Breast epithelium (tissue), 4 donors: ENCODE measurements at regions of chr9 and their contacts with region 1.

Region 1: GRCh38 chr9:68619636-68620035 is 79.0 kb upstream of the TMEM252 start:
- DNase-seq: no peak
- H3K4me3 ChIP-seq: no peak overlapping the region
- H3K27ac ChIP-seq: no peak overlapping the region
- H3K4me1 ChIP-seq: no peaks in the 10 kb centered on the region
- H3K27me3 ChIP-seq: no peaks in the 10 kb centered on the region
- CTCF ChIP-seq: no peak
- POLR2A ChIP-seq: no peak

Region 2: DNA sequence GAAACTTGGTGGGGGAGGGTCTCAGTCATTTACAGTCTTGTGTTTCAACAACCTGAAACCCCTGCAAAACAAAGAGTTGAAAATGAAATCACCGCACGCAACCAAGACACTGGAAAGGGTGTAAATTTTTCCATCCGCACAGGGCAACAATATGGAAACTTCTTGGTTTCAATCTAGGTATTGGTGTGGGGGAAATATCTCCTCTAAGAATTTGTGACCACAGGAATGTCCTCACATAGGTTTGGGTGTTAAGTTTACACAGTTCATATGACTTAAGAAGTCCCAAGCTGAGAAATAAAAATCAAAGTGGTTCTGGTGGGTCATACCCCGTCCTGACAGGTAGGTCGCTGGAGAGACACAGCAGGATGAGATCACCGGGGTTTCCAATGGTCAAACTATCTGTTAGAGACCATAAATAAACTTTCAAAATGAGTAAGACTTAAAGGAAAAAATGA is 33.5 kb after region 1 on chr9:
- intact Hi-C with region 1: no loop called
- DNase-seq: no peak
- H3K4me3 ChIP-seq: no peak overlapping the region
- H3K27ac ChIP-seq: no peak overlapping the region
- H3K4me1 ChIP-seq: no peaks in the 10 kb centered on the region
- H3K27me3 ChIP-seq: no peaks in the 10 kb centered on the region
- CTCF ChIP-seq: no peak
- POLR2A ChIP-seq: no peak

Region 3: GRCh38 chr9:68979538-68980314 is 360.1 kb after region 1 on chr9:
- intact Hi-C with region 1: loop called (anchors 5 kb)
- DNase-seq: no peak
- H3K4me3 ChIP-seq: no peak overlapping the region
- H3K27ac ChIP-seq: no peak overlapping the region
- H3K4me1 ChIP-seq: no peaks in the 10 kb centered on the region
- H3K27me3 ChIP-seq: no peaks in the 10 kb centered on the region
- CTCF ChIP-seq: no peak
- POLR2A ChIP-seq: no peak